ENCODE measurements at regions of chr10 and their contacts with region 1.

Region 1: DNA sequence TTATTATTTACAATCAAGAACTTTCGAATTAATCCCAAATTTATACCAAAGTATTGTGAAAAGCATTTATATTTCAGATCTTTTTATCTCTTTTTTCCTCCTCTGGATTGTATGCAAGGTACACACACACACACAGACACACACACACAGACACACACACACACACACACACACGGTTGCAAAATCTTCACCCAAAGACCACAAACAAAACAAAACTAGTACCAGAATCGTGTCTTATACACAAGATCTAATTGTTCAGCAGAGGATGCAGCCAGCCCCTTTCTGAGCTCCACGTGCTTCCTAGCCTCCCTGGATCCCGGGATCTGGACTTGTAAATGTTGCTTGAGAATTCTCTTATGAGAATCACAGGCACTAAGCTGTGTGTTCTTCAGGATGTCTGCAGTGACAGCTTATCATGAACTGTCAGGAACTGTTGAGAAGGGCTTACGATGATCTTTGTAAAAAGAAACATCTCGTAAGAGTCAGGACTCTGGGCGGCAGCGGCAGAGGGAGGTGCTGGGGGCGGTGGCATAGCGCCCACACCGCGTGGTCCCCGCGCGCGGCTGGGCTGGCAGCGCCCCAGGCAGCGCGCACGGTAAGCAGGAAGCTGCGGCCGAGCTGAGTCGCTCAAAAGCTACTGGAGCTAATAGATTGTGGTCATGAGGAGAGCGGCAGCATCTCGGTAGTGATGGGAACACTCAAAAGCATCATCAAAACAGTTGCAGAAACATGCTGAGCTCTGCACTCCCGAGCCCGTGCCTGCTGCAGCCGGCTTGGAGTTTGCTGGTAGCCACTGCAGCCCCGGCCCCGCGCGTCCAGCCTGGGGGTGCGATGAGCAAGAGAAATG is 277.6 kb downstream of the GATA3 start:
- DNase-seq: peak; percentile 95
- H3K4me3 Mint-ChIP-seq: peak overlapping the region; percentile 85
- H3K27ac Mint-ChIP-seq: peak overlapping the region; percentile 95
- H3K4me1 Mint-ChIP-seq: peaks cover 81% of the 10 kb centered on the region
- H3K27me3 Mint-ChIP-seq: no peaks in the 10 kb centered on the region

Region 2: GRCh38 chr10:8053446-8054290 is 278.4 kb before region 1 on chr10:
- CTCF ChIA-PET with region 1: interaction called, 8 read pairs
- POLR2A ChIA-PET with region 1: interaction called, 84 read pairs
- DNase-seq: peak; percentile 95
- H3K4me3 Mint-ChIP-seq: peak overlapping the region; percentile 98
- H3K27ac Mint-ChIP-seq: peak overlapping the region; percentile 98
- H3K4me1 Mint-ChIP-seq: peaks cover 36% of the 10 kb centered on the region
- H3K27me3 Mint-ChIP-seq: peaks cover 24% of the 10 kb centered on the region

Region 3: DNA sequence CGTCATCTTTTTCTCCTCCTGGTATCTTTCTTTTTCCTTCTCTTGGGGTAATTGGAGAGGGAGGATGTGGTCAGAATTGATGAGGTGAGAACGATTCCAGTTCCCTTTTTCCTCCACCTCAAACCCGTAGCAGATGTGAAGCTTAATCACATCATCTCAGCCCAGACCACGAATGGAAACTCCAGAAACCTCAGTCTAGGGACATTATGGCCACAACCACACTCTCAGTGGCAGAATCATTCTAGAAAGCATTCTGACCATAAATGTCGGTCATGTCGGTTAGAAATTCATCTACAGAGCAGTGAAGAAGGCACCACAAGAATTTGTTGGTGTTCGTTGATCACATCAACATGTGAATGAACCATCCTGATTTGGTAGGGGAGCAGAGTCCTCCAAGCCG is 199.0 kb before region 1 on chr10:
- CTCF ChIA-PET with region 1: interaction called, 3 read pairs
- POLR2A ChIA-PET with region 1: interaction called, 47 read pairs
- DNase-seq: peak; percentile 70
- H3K4me3 Mint-ChIP-seq: peak overlapping the region; percentile 65
- H3K27ac Mint-ChIP-seq: peak overlapping the region; percentile 86
- H3K4me1 Mint-ChIP-seq: peaks cover 78% of the 10 kb centered on the region
- H3K27me3 Mint-ChIP-seq: no peaks in the 10 kb centered on the region

Region 4: DNA sequence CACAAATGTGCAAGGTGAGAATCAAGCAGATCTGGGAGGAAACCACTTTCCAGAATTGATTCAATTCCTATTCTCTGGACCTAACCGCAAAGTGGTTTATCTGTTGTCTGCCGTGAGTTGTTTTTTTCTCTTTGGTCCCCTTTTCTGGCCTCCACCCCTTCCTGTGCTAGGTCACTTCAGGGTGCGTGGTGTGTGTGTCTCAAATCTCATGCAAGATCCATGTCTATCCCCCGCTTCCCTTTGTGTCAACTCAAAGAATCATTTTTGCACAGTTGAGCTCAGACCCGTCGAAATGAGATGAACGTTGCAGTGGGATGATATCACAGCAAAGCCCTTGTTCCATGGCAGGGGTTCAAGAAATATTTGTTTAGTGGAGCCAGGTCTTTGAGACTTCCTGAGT is 93.1 kb before region 1 on chr10:
- CTCF ChIA-PET with region 1: no interaction called
- POLR2A ChIA-PET with region 1: interaction called, 18 read pairs
- DNase-seq: peak; percentile 63
- H3K4me3 Mint-ChIP-seq: peak overlapping the region; percentile 6
- H3K27ac Mint-ChIP-seq: peak overlapping the region; percentile 77
- H3K4me1 Mint-ChIP-seq: peaks cover 68% of the 10 kb centered on the region
- H3K27me3 Mint-ChIP-seq: no peaks in the 10 kb centered on the region

Region 5: GRCh38 chr10:8283986-8284385 is 48.1 kb before region 1 on chr10:
- CTCF ChIA-PET with region 1: no interaction called
- POLR2A ChIA-PET with region 1: no interaction called
- DNase-seq: no peak
- H3K4me3 Mint-ChIP-seq: no peak overlapping the region
- H3K27ac Mint-ChIP-seq: no peak overlapping the region
- H3K4me1 Mint-ChIP-seq: peaks cover 9% of the 10 kb centered on the region
- H3K27me3 Mint-ChIP-seq: no peaks in the 10 kb centered on the region

Region 6: GRCh38 chr10:8360365-8360764 is 28.3 kb after region 1 on chr10:
- CTCF ChIA-PET with region 1: interaction called, 11 read pairs
- POLR2A ChIA-PET with region 1: interaction called, 69 read pairs
- DNase-seq: no peak
- H3K4me3 Mint-ChIP-seq: peak overlapping the region; percentile 28
- H3K27ac Mint-ChIP-seq: peak overlapping the region; percentile 88
- H3K4me1 Mint-ChIP-seq: peaks cover 72% of the 10 kb centered on the region
- H3K27me3 Mint-ChIP-seq: peaks cover 2% of the 10 kb centered on the region

Region 7: DNA sequence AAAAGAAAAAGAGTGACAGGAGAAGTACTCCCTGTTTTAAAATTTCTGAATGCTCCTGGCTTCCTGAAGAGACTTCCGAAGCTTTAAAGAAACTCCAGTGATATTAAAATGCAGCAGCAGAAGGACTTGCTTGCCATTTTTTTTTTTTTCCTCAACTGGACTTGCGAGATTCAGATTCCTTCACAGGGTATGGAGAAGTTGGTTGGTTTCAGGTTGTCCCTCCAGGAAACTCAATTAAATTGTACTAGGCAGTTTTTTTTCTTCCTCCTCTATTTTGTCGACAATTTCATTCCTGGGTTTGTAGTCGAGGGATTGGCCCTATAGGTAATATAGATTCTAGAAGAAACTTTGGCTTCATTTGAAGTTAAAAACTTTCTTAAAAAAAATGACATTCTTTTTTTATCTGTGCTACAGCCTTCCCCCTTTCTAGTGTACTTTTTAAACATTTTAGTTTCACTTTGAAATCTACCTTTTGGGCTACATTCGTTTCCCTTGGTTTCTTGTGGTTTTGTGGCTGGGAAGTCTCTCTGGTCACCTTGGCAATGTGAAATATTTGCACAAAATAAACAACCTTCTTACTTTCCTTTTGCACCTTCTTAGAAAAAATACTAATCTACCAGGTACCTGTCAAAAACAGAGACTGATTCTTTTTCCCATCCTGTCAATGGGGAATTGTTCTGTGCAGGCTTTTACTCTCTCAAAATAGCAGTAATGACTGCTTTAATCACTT is 72.5 kb after region 1 on chr10:
- CTCF ChIA-PET with region 1: interaction called, 10 read pairs
- POLR2A ChIA-PET with region 1: interaction called, 64 read pairs
- DNase-seq: peak; percentile 71
- H3K4me3 Mint-ChIP-seq: peak overlapping the region; percentile 57
- H3K27ac Mint-ChIP-seq: peak overlapping the region; percentile 89
- H3K4me1 Mint-ChIP-seq: peaks cover 80% of the 10 kb centered on the region
- H3K27me3 Mint-ChIP-seq: no peaks in the 10 kb centered on the region

Measured in activated CD4-positive, alpha-beta memory T cell treated with anti-CD3 and anti-CD28 coated beads, Interleukin-2, amount 10 ng/mL, durations not matched to agents 7 days and 5 days (primary cell).